Dorsolateral prefrontal cortex (tissue), 120 donors: ENCODE measurements at regions of chr3 and their contacts with region 1.

Region 1: GRCh38 chr3:47836986-47837385 is 34.0 kb downstream of the DHX30 start:
- DNase-seq: peak in 2 of 10 donors; percentile 42 to 65
- H3K4me3 ChIP-seq: no peak overlapping the region
- H3K27ac ChIP-seq: peak overlapping the region in 54 of 59 donors; percentile 10 to 83 (median 65)
- H3K27me3 ChIP-seq: no peaks in the 10 kb centered on the region
- CTCF ChIP-seq: no peak

Region 2: DNA sequence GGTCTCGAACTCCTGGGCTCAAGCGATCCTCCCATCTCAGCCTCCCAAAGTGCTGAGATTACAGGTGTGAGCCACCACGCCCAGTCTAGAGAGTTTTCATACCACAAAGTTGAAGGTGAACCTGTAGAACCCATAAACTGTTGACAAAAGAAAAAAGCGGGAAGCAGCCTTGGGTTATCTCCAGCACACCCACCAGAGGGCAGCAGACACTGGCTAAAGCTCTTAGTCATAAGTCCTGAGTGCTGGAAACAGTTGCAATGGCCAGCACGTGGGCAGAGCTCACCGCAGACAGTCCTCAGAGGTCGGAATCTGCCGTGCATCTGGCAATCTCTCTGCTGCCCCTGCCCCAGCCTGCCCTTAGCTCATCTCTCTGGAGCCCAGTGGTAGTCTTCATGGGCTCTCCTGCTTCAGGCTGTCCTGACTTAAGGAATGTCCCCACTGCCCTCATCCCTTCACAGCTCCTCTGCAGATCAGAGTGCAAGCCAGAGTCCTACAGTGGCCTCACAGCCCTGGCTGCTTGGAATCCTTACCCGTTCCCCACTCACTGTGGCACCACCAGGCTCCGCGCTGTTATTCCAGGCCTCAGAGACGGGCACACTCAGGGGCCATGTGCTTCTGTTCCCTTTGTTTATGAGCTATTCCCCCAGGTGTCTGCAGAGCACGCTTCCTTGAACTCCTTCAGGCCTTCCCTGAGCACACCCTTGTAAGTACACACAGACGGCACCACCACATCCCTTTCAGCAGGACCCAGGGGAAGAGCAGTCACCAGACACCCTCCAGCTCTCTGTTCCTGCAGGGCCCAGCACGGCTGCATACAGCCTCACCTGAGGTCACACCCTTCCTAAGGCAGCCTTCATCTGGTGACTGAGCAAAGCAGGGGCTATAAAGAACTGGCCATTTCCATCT is 314.7 kb before region 1 on chr3:
- intact Hi-C with region 1: no loop called
- DNase-seq: peak; percentile 68 to 92 (median 82)
- H3K4me3 ChIP-seq: peak overlapping the region in 5 of 59 donors; percentile 11 to 34 (median 14)
- H3K27ac ChIP-seq: peak overlapping the region in 5 of 59 donors; percentile 8 to 47 (median 27)
- H3K27me3 ChIP-seq: no peaks in the 10 kb centered on the region
- CTCF ChIP-seq: peak; percentile 77 to 98 (median 94)

Region 3: GRCh38 chr3:48088749-48089466 is 251.9 kb after region 1 on chr3:
- intact Hi-C with region 1: loop called (anchors 2 to 5 kb)
- DNase-seq: peak; percentile 94 to 98 (median 96)
- H3K4me3 ChIP-seq: peak overlapping the region; percentile 62 to 99 (median 89)
- H3K27ac ChIP-seq: peak overlapping the region; percentile 72 to 99 (median 95)
- H3K27me3 ChIP-seq: no peaks in the 10 kb centered on the region
- CTCF ChIP-seq: peak in 16 of 56 donors; percentile 8 to 40 (median 19)

Region 4: GRCh38 chr3:48151058-48151806 is 314.2 kb after region 1 on chr3:
- intact Hi-C with region 1: loop called (anchors 2 to 5 kb)
- DNase-seq: peak; percentile 54 to 84 (median 76)
- H3K4me3 ChIP-seq: peak overlapping the region in 1 of 59 donors; percentile 5
- H3K27ac ChIP-seq: peak overlapping the region in 38 of 59 donors; percentile 1 to 71 (median 41)
- H3K27me3 ChIP-seq: no peaks in the 10 kb centered on the region
- CTCF ChIP-seq: peak in 55 of 56 donors; percentile 50 to 90 (median 77)